ENCODE measurements at regions of chr7 and their contacts with region 1.

Region 1: GRCh38 chr7:8134089-8134733 is 127.8 kb downstream of the ICA1 start:
- DNase-seq: peak; percentile 46
- H3K4me3 Mint-ChIP-seq: peak overlapping the region; percentile 10
- H3K27ac Mint-ChIP-seq: peak overlapping the region; percentile 70
- H3K4me1 Mint-ChIP-seq: peaks cover 63% of the 10 kb centered on the region
- H3K27me3 Mint-ChIP-seq: no peaks in the 10 kb centered on the region

Region 2: DNA sequence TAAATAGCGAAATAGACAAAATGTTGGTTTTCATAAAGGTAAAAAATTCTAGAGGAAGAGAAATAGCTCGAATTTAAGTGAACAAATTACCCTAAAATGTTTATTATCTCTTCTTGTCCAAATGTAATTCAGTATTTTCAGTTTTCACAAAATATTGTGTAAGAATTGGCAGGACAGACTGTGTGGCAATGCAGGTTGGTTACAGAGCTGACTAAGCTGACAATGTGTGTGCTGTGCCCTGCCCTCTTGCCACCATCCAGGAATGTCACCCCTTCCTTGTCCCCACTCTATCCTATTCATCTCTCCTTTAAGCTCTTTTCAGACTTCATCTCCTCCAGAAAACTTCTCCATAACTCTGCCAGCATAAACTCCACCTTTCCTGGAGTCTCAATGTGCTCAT is 644.7 kb before region 1 on chr7:
- intact Hi-C with region 1: no loop called
- DNase-seq: no peak
- H3K4me3 Mint-ChIP-seq: no peak overlapping the region
- H3K27ac Mint-ChIP-seq: no peak overlapping the region
- H3K4me1 Mint-ChIP-seq: no peaks in the 10 kb centered on the region
- H3K27me3 Mint-ChIP-seq: peaks cover 2% of the 10 kb centered on the region

Region 3: GRCh38 chr7:7681179-7681935 is 452.9 kb before region 1 on chr7:
- intact Hi-C with region 1: loop called (anchors 2 kb)
- DNase-seq: peak; percentile 12
- H3K4me3 Mint-ChIP-seq: no peak overlapping the region
- H3K27ac Mint-ChIP-seq: no peak overlapping the region
- H3K4me1 Mint-ChIP-seq: peaks cover 12% of the 10 kb centered on the region
- H3K27me3 Mint-ChIP-seq: no peaks in the 10 kb centered on the region

Region 4: DNA sequence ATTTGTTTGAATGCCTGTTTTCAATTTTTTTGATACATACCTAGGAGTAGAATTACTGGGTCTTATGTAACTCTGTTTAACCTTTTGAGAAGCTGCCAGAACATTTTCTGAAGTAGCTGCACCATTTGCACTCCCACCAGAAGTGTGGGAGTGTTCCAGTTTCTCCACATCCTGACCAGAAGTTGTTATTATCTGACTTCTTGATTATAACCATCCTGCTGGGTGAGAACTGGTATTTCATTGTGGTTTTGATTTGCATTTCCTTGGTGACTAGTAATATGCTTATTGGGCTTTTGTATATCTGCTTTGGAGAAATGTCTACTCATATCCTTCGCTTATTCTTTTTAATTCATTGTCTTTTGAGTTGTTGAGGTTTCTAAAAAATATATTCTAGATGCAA is 282.8 kb before region 1 on chr7:
- intact Hi-C with region 1: loop called (anchors 2 kb)
- DNase-seq: no peak
- H3K4me3 Mint-ChIP-seq: no peak overlapping the region
- H3K27ac Mint-ChIP-seq: no peak overlapping the region
- H3K4me1 Mint-ChIP-seq: peaks cover 30% of the 10 kb centered on the region
- H3K27me3 Mint-ChIP-seq: no peaks in the 10 kb centered on the region

Region 5: GRCh38 chr7:8042796-8043535 is 91.2 kb before region 1 on chr7:
- intact Hi-C with region 1: loop called (anchors 1 kb)
- DNase-seq: no peak
- H3K4me3 Mint-ChIP-seq: no peak overlapping the region
- H3K27ac Mint-ChIP-seq: peak overlapping the region; percentile 61
- H3K4me1 Mint-ChIP-seq: peaks cover 74% of the 10 kb centered on the region
- H3K27me3 Mint-ChIP-seq: no peaks in the 10 kb centered on the region

Region 6: DNA sequence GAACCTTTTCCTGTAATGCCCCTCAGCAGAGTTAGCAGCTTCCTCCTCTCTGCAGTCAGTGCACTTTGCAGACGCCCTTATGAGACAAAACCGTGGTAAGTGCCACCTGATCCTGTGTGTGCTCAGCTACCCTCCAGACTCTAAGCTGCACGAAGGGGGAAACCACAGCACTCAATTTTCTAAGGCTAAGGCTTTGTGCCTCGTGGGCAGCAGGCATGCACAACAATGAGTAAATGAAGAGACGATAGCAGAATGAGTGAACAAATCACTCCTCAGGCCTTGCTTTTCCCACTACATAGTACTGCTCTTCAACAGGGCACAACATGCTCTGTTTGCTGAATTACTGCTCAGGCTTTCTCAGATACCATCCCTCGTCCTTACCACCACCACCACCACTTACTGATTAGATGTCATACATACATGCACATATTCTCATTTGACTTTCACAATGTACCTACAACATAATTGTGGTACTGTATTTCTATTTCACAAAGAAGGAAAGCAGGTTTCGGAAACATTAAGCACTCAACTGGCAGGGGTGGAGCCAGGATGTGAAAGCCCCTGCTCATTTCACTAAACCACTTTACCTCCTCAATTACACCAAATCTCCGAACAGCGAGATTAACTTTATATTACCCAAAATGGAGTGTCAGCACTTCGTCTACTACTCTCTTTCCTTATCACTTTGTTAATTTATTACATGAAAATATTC is 42.3 kb after region 1 on chr7:
- intact Hi-C with region 1: loop called (anchors 1 kb)
- DNase-seq: peak; percentile 60
- H3K4me3 Mint-ChIP-seq: peak overlapping the region; percentile 76
- H3K27ac Mint-ChIP-seq: peak overlapping the region; percentile 99
- H3K4me1 Mint-ChIP-seq: peaks cover 53% of the 10 kb centered on the region
- H3K27me3 Mint-ChIP-seq: peaks cover 2% of the 10 kb centered on the region